Heart left ventricle (tissue), 16 donors: ENCODE measurements at regions of chr7 and their contacts with region 1.

Region 1: GRCh38 chr7:31648288-31648687 is 38.7 kb upstream of the PPP1R17 start:
- DNase-seq: no peak
- ATAC-seq: no peak
- H3K4me3 ChIP-seq: no peak overlapping the region
- H3K27ac ChIP-seq: no peak overlapping the region
- H3K4me1 ChIP-seq: no peaks in the 10 kb centered on the region
- H3K27me3 ChIP-seq: no peaks in the 10 kb centered on the region
- CTCF ChIP-seq: peak in 8 of 12 donors; percentile 10 to 39 (median 32)
- POLR2A ChIP-seq: no peak

Region 2: GRCh38 chr7:31663072-31663471 is 14.8 kb after region 1 on chr7:
- intact Hi-C with region 1: loop called in 1 of 10 experiments (anchors 1 kb)
- DNase-seq: no peak
- ATAC-seq: no peak
- H3K4me3 ChIP-seq: no peak overlapping the region
- H3K27ac ChIP-seq: no peak overlapping the region
- H3K4me1 ChIP-seq: peaks cover 0 to 7% (median 0%) of the 10 kb centered on the region in 12 donors
- H3K27me3 ChIP-seq: no peaks in the 10 kb centered on the region
- CTCF ChIP-seq: peak in 1 of 12 donors; percentile 5
- POLR2A ChIP-seq: no peak